ENCODE measurements at regions of chr1 and their contacts with region 1.

Region 1: GRCh38 chr1:45521398-45522323 is at the start of gene PRDX1:
- DNase-seq: peak; percentile 98
- ATAC-seq: peak; percentile 87
- H3K4me3 Mint-ChIP-seq: peak within 1 kb of the TSS; percentile 93
- H3K27ac Mint-ChIP-seq: peak within 1 kb of the TSS; percentile 92
- H3K4me1 Mint-ChIP-seq: peaks cover 49% of the 10 kb centered on the region
- H3K27me3 Mint-ChIP-seq: no peaks in the 10 kb centered on the region
- CTCF ChIP-seq: no peak
- total RNA-seq, gene PRDX1: 351 and 413 TPM in 2 replicates

Region 2: DNA sequence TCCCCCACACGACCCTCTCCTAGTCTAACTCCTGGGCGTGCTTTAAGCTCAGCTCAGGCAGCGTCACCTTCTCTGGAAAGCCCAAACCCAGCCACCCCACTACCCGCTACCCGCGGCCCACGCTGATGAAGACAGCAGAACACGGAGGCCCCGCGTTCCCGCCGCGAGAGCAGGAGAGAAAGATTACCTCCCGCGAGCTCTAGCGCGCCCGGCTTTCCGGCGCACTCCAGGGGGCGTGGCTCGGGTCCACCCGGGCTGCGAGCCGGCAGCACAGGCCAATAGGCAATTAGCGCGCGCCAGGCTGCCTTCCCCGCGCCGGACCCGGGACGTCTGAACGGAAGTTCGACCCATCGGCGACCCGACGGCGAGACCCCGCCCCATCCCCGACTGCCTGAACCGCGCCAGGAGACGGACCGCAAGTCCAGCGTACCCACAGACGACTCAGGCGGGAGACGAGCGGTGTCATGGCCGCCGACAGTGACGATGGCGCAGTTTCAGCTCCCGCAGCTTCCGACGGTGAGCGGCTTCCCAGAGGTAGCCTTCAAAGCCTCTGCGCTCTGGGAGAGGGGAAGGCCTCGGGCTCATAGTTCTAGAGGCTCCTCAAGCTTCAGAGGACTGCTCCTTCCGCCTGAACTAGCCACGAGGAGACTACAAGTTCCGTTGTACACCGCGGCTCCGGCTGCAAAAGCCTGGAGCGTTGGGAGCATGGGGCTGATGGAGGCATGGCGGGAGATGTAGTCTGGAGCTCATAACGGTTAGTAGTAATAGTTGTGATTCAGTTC is 181.7 kb before region 1 on chr1 and contains the starts of genes MUTYH and TOE1:
- CTCF ChIA-PET with region 1: interaction called, 3 read pairs
- POLR2A ChIA-PET with region 1: interaction called, 25 read pairs
- intact Hi-C with region 1: no loop called
- DNase-seq: peak; percentile 85
- ATAC-seq: peak; percentile 86
- H3K4me3 Mint-ChIP-seq: peak within 1 kb of the TSS; percentile 100
- H3K27ac Mint-ChIP-seq: peak within 1 kb of the TSS; percentile 99
- H3K4me1 Mint-ChIP-seq: peaks cover 39% of the 10 kb centered on the region
- H3K27me3 Mint-ChIP-seq: no peaks in the 10 kb centered on the region
- CTCF ChIP-seq: no peak
- total RNA-seq, gene MUTYH: 61.0 and 63.0 TPM in 2 replicates
- total RNA-seq, gene TOE1: 24.6 and 25.3 TPM in 2 replicates

Region 3: DNA sequence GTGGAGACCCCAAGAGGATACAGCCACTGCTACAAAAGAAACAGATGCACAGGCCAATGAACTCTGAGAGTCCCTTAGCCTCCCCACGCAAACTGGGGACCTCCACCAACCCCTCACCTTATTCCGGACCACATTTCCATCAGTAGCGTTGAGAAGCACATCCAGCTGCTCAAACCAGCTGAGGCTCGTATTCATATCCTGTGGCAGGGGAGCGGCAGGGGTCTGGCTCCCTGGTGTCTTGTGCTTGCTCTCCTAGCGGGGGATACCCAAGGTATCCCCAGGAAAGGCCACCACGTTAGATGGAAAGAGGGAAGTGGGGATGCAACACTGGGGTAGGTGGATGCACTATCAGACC is 22.3 kb before region 1 on chr1:
- CTCF ChIA-PET with region 1: interaction called, 3 read pairs
- POLR2A ChIA-PET with region 1: interaction called, 58 read pairs
- intact Hi-C with region 1: loop called (anchors 1 kb)
- DNase-seq: no peak
- ATAC-seq: no peak
- H3K4me3 Mint-ChIP-seq: peak overlapping the region; percentile 97
- H3K27ac Mint-ChIP-seq: peak overlapping the region; percentile 88
- H3K4me1 Mint-ChIP-seq: peaks cover 27% of the 10 kb centered on the region
- H3K27me3 Mint-ChIP-seq: no peaks in the 10 kb centered on the region
- CTCF ChIP-seq: no peak

Region 4: DNA sequence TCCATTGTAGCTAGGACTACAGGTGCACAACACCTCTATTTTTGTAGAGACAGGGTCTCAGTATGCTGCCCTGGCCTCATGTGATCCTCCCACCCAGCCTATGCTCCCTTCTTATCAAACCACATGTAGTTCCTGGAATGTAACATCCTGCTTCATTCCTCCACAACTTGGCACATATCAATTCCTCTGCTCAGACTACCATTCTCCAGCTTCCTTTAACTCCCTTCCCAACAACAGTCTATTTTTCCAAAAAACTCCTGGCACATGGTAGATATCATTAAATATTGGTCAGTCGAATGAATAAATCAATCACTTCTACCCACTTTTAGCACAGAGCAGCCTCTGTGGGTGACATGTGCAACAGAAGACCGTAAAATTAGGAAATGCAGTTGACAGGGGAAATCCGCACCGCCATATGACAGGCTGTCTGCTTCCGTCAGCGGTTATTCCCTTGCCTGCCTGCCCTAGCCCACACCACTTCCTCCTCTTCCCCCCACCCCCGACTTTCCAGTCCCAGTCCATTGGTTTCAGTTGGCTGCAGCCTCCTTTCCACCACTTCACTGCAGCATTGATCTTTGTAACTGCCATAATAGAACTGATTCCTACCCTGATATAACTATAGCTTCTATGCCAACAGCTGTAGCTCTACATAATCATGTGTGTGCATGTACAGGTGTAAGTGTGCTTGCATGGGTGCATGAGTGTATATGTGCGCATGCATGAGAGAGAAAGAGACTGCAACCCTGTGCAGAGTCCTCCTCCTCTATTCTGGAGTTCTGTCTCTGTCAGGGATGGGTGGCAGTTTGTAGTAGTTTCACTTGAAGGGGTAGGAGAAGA is 22.1 kb after region 1 on chr1:
- CTCF ChIA-PET with region 1: interaction called, 11 read pairs
- POLR2A ChIA-PET with region 1: interaction called, 457 read pairs
- intact Hi-C with region 1: loop called (anchors 1 kb)
- DNase-seq: peak; percentile 55
- ATAC-seq: peak; percentile 84
- H3K4me3 Mint-ChIP-seq: peak overlapping the region; percentile 76
- H3K27ac Mint-ChIP-seq: peak overlapping the region; percentile 94
- H3K4me1 Mint-ChIP-seq: peaks cover 56% of the 10 kb centered on the region
- H3K27me3 Mint-ChIP-seq: no peaks in the 10 kb centered on the region
- CTCF ChIP-seq: no peak

Region 5: DNA sequence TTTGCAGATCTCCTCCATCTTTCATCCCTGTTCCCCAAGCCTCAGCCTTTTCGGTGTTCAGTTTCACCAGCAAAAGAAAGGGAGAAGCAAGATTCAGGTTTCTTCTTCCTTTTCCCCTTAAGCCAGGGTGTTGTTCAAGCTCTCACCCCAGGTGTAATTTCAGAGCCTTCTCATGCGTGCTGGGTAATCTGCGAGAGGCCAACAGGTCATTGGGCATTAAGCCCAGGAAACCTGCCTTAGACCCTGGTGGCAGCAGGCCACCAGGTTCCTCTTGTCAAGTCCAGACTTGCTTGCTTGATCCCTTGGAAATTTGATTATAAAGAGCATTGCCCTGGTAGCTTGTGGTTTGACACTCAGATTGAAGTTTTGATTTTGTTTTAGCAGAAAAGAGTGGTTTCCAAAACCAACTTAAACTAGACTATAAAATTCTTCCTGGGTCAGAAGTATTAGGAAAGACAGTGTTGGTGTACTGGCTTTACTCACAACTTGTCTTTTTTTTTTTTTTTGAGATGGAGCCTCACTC is 35.8 kb after region 1 on chr1:
- CTCF ChIA-PET with region 1: no interaction called
- POLR2A ChIA-PET with region 1: interaction called, 457 read pairs
- intact Hi-C with region 1: no loop called
- DNase-seq: no peak
- ATAC-seq: no peak
- H3K4me3 Mint-ChIP-seq: no peak overlapping the region
- H3K27ac Mint-ChIP-seq: no peak overlapping the region
- H3K4me1 Mint-ChIP-seq: peaks cover 16% of the 10 kb centered on the region
- H3K27me3 Mint-ChIP-seq: no peaks in the 10 kb centered on the region
- CTCF ChIP-seq: no peak

Region 6: GRCh38 chr1:46379996-46380395 is 858.3 kb after region 1 on chr1:
- CTCF ChIA-PET with region 1: no interaction called
- POLR2A ChIA-PET with region 1: no interaction called
- intact Hi-C with region 1: no loop called
- DNase-seq: no peak
- ATAC-seq: no peak
- H3K4me3 Mint-ChIP-seq: no peak overlapping the region
- H3K27ac Mint-ChIP-seq: no peak overlapping the region
- H3K4me1 Mint-ChIP-seq: no peaks in the 10 kb centered on the region
- H3K27me3 Mint-ChIP-seq: no peaks in the 10 kb centered on the region
- CTCF ChIP-seq: no peak